AG04449 (cell line): ENCODE measurements at regions of chr1 and their contacts with region 1.

Region 1: DNA sequence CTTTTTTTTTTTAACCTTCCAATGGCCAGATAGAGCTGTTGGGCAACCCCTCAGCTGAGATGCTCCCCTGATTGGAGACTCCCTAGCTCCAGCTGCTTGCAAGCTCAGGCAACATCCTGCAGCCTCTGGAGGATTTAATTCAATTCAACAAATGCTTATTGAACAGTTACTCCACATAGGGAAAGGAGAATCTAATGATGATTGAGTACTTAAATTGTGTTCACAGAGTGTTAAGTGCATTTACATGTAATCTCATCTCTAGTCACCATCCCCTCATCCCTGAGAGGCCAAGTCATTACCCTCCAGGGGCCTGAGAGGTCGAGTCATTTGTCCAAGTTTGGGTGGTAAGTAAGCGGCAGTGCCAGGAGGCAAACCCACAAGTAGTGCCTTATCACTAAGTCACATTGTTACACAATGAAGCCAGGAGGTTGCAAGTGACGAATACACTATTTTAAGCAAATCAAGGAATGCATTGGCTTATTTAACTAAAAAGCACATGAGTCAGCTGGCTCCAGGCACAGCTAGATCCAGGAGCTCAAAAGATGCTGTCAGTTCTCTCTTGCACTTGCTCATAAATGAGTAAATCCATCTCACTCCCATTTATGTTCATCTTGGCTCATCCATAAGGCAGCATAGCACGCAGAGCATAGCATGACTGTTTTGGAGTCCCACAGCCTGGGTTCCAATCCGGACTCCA is 64.3 kb downstream of the OPTC start:
- DNase-seq: peak; percentile 99
- H3K4me3 ChIP-seq: no peak overlapping the region; the same call in 1 of the 2 replicates
- CTCF ChIP-seq: no peak

Region 2: DNA sequence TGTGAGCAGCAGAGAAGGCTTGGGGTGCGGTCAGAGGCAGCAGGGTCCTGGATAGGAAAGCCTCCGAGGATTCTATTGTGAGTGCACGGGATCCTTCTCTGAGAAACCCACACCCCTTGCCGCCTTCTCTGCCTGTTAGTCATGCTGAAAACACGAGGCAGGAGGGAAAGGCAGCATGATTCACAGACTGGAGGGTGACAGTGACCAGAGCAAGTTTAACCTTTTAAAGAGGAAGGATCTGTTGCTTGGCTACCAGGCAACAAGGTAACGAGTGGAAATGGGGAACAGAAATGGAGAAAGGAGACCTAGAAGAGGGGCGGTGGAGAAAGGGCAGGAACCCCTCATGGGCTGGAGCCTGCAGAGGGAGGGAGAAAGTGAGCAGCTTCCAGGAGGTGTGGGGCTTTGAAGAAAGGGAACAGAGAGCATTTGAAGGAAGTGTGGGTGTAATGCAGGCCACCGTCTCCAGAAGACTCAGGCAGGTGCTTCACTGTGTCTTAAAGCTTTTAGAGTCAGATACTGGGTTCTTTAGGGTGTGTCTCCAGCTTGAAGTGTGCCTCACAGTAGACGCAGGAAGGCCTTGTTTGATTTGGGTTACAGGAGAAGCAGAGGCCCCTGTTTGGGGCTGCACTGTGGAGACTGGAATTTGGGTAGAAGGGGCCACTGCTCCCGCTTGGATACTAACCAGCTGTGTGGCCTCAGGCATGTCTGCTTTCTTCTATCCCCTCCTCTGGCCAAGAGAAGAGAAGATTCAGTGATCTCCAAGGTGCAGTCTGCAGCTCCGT is 45.2 kb before region 1 on chr1:
- CTCF ChIA-PET with region 1: no interaction called
- POLR2A ChIA-PET with region 1: interaction called, 10 read pairs
- DNase-seq: peak; percentile 70
- H3K4me3 ChIP-seq: peak overlapping the region; percentile 25
- CTCF ChIP-seq: no peak

Region 3: DNA sequence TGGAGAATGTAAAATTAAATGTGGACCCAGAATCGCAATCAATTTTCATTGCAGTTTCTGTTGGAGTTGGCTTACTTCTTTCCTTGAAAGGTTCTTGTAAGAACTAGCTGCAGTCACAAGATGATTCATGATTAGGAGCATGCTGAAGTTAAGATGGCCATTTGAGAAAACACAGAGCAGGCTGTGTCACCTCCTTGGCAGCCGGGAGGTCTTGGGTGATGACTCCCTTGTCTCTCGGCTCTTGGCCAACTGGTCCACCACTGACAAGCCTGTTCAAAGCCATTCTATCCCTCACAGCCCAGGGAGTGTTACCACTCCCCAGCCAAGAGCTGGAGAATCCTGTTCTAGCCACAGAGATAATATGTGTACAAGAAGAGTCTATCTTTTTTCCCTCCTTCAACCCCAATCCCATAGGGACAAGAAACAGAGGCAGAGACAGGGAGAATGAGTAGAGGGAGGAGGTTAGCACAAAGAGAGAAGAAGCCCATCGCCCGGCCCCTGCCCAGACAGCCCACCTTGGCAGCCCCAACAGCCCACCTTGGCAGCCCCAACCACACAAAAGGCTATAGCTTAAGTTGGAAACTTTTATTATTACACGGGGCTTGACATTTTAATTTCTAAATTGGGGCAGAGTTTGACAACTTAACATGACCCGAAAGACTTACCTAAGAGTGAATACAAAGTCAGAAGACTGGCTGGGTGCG is 23.5 kb before region 1 on chr1:
- CTCF ChIA-PET with region 1: no interaction called
- POLR2A ChIA-PET with region 1: interaction called, 15 read pairs
- DNase-seq: peak; percentile 89
- H3K4me3 ChIP-seq: no peak overlapping the region
- CTCF ChIP-seq: no peak

Region 4: GRCh38 chr1:203569490-203570318 is 11.5 kb after region 1 on chr1:
- CTCF ChIA-PET with region 1: no interaction called
- POLR2A ChIA-PET with region 1: interaction called, 17 read pairs
- DNase-seq: no peak
- H3K4me3 ChIP-seq: no peak overlapping the region
- CTCF ChIP-seq: no peak

Region 5: GRCh38 chr1:203625628-203626019 is 67.4 kb after region 1 on chr1:
- CTCF ChIA-PET with region 1: interaction called, 3 read pairs
- POLR2A ChIA-PET with region 1: interaction called, 13 read pairs
- DNase-seq: no peak
- H3K4me3 ChIP-seq: no peak overlapping the region
- CTCF ChIP-seq: no peak